Heart left ventricle (tissue), 16 donors: ENCODE measurements at regions of chr4 and their contacts with region 1.

Region 1: GRCh38 chr4:11469650-11470437 is 41.1 kb upstream of the HS3ST1 start:
- DNase-seq: no peak
- ATAC-seq: no peak
- H3K4me3 ChIP-seq: no peak overlapping the region
- H3K27ac ChIP-seq: no peak overlapping the region
- H3K4me1 ChIP-seq: peaks cover 0 to 28% (median 0%) of the 10 kb centered on the region in 12 donors
- H3K27me3 ChIP-seq: no peaks in the 10 kb centered on the region
- CTCF ChIP-seq: no peak
- POLR2A ChIP-seq: no peak

Region 2: GRCh38 chr4:11355224-11355623 is 114.6 kb before region 1 on chr4:
- intact Hi-C with region 1: loop called in 1 of 10 experiments (anchors 5 kb)
- DNase-seq: no peak
- ATAC-seq: no peak
- H3K4me3 ChIP-seq: no peak overlapping the region
- H3K27ac ChIP-seq: no peak overlapping the region
- H3K4me1 ChIP-seq: no peaks in the 10 kb centered on the region
- H3K27me3 ChIP-seq: peaks cover 0 to 4% (median 0%) of the 10 kb centered on the region in 9 donors
- CTCF ChIP-seq: no peak
- POLR2A ChIP-seq: no peak